ENCODE measurements at regions of chr6 and their contacts with region 1.

Region 1: GRCh38 chr6:7243179-7243981 is 69.6 kb downstream of the SSR1 start:
- DNase-seq: peak; percentile 72
- H3K4me3 ChIP-seq: no peak overlapping the region
- H3K27ac ChIP-seq: peak overlapping the region; percentile 57
- H3K4me1 ChIP-seq: peaks cover 16% of the 10 kb centered on the region
- H3K27me3 ChIP-seq: no peaks in the 10 kb centered on the region

Region 2: DNA sequence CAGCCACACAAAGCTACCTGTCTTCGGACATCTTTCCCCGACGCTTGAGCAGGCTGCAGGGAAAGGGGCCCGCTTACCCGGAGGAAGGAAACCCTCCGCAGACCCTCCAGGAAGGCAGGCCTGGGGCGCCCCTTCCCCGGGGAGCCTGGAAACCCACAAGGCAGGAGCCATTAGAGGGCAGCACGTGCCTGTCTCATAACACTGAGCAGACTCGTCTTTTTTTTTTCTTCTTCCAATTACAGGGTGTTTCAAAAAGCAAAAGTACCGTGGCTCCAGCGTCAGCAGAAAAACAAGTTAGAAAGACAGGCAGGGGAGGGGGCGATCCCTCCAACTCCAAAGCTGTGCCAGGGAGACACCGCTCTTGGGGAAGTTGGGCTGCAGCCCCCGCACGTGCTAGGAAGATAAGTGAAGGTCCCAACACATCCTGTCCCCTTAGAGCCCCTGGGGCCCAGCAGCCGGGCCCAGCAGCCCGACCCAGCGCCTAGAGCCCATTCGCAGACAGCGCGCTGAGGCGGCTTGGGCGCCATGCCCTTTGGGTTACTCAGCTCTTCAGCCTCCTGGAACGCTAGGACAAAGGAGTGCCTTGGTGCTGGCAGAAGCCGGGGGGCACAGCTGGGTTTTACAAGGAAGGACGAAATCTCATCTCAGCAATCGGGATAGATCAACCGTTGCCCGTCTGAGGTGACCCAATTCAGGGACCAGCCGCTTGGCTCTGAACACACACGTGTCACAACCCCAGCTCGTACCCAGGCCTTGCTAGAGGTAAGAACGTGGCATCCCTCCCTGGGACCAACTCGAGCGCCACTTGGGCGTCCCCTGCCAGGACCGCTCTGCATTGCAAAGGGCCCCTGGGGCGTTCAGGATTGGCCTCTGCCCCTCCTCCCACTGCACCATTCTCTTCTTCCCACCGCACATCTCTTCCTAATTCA is 518.6 kb before region 1 on chr6:
- in situ Hi-C with region 1: loop called (anchors 10 kb)
- DNase-seq: peak; percentile 88
- H3K4me3 ChIP-seq: peak overlapping the region; percentile 67
- H3K27ac ChIP-seq: peak overlapping the region; percentile 67
- H3K4me1 ChIP-seq: peaks cover 9% of the 10 kb centered on the region
- H3K27me3 ChIP-seq: no peaks in the 10 kb centered on the region

Region 3: GRCh38 chr6:7107578-7108195 is 135.7 kb before region 1 on chr6 and contains the start of gene RREB1:
- in situ Hi-C with region 1: loop called (anchors 10 kb)
- DNase-seq: peak; percentile 87
- H3K4me3 ChIP-seq: peak within 1 kb of the TSS; percentile 92
- H3K27ac ChIP-seq: peak within 1 kb of the TSS; percentile 81
- H3K4me1 ChIP-seq: peaks cover 30% of the 10 kb centered on the region
- H3K27me3 ChIP-seq: no peaks in the 10 kb centered on the region
- total RNA-seq, gene RREB1: 9.4 and 12.4 TPM in 2 replicates

Measured in GM23248 (cell line).